Heart right ventricle (tissue), 16 donors: ENCODE measurements at regions of chr6 and their contacts with region 1.

Region 1: GRCh38 chr6:11392778-11393507 is 144.6 kb upstream of the TMEM170B start:
- DNase-seq: peak in 1 of 2 donors; percentile 35
- ATAC-seq: peak; percentile 20 to 60 (median 38)
- H3K4me3 ChIP-seq: no peak overlapping the region
- H3K27ac ChIP-seq: peak overlapping the region in 9 of 10 donors; percentile 24 to 74 (median 53)
- H3K4me1 ChIP-seq: peaks cover 0 to 35% (median 23%) of the 10 kb centered on the region in 9 donors
- H3K27me3 ChIP-seq: peaks cover 0 to 4% (median 0%) of the 10 kb centered on the region in 7 donors
- CTCF ChIP-seq: peak in 1 of 9 donors; percentile 7

Region 2: GRCh38 chr6:11366183-11366933 is 26.6 kb before region 1 on chr6:
- intact Hi-C with region 1: no loop called
- DNase-seq: no peak
- ATAC-seq: peak in 1 of 8 donors; percentile 5
- H3K4me3 ChIP-seq: no peak overlapping the region
- H3K27ac ChIP-seq: peak overlapping the region; percentile 76 to 92 (median 86)
- H3K4me1 ChIP-seq: peaks cover 2 to 72% (median 63%) of the 10 kb centered on the region in 9 donors
- H3K27me3 ChIP-seq: no peaks in the 10 kb centered on the region
- CTCF ChIP-seq: no peak

Region 3: DNA sequence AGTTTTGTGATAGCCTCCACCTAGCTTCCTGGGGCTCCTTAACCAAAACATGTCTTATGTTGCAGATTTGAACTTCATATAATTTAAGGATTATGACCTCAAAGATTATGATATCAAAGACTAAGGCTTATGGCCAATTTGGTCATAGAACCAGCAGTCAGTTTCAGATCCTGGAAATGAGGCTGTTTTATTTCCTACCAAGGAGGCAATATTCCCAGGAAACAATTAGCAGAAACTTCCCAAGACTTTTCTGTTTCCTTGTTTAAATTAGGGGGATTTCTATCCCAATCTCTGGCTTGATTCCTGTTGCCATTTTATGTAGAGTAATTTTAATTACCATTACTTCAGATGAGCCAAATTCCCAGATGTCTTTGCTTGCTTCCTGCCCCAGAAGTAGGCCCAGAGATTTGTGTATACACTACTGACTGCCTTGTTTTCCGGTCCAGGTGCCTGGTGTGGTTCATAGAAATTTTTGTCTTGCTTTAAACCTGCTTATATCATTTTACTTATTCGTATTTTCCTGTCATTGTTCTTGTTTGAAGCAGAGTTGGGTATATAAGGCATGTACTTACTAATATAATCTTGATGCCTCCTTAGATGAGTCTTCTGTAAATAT is 25.5 kb after region 1 on chr6:
- intact Hi-C with region 1: loop called in 1 of 10 experiments (anchors 1 kb)
- DNase-seq: no peak
- ATAC-seq: peak in 6 of 8 donors; percentile 56 to 92 (median 73)
- H3K4me3 ChIP-seq: no peak overlapping the region
- H3K27ac ChIP-seq: peak overlapping the region in 8 of 10 donors; percentile 18 to 65 (median 45)
- H3K4me1 ChIP-seq: peaks cover 0 to 15% (median 5%) of the 10 kb centered on the region in 9 donors
- H3K27me3 ChIP-seq: no peaks in the 10 kb centered on the region
- CTCF ChIP-seq: no peak

Region 4: GRCh38 chr6:11434565-11435326 is 41.8 kb after region 1 on chr6:
- intact Hi-C with region 1: loop called in 1 of 10 experiments (anchors 5 kb)
- DNase-seq: no peak
- ATAC-seq: peak in 1 of 8 donors; percentile 26
- H3K4me3 ChIP-seq: no peak overlapping the region
- H3K27ac ChIP-seq: peak overlapping the region in 4 of 10 donors; percentile 55 to 81 (median 78)
- H3K4me1 ChIP-seq: peaks cover 9 to 61% (median 31%) of the 10 kb centered on the region in 9 donors
- H3K27me3 ChIP-seq: no peaks in the 10 kb centered on the region
- CTCF ChIP-seq: no peak